ENCODE measurements at regions of chr19 and their contacts with region 1.

Region 1: GRCh38 chr19:7340959-7341837 is 7.5 kb upstream of the ARHGEF18 start:
- DNase-seq: peak; percentile 91
- H3K4me3 Mint-ChIP-seq: no peak overlapping the region
- H3K27ac Mint-ChIP-seq: peak overlapping the region; percentile 33
- H3K4me1 Mint-ChIP-seq: peaks cover 43% of the 10 kb centered on the region
- H3K27me3 Mint-ChIP-seq: no peaks in the 10 kb centered on the region

Region 2: GRCh38 chr19:7013678-7014077 is 327.5 kb before region 1 on chr19:
- CTCF ChIA-PET with region 1: no interaction called
- POLR2A ChIA-PET with region 1: no interaction called
- intact Hi-C with region 1: loop called (anchors 10 kb)
- DNase-seq: peak; percentile 37
- H3K4me3 Mint-ChIP-seq: no peak overlapping the region
- H3K27ac Mint-ChIP-seq: peak overlapping the region; percentile 71
- H3K4me1 Mint-ChIP-seq: peaks cover 41% of the 10 kb centered on the region
- H3K27me3 Mint-ChIP-seq: no peaks in the 10 kb centered on the region

Region 3: GRCh38 chr19:7098701-7099596 is 242.2 kb before region 1 on chr19:
- CTCF ChIA-PET with region 1: interaction called, 29 read pairs
- POLR2A ChIA-PET with region 1: interaction called, 3 read pairs
- intact Hi-C with region 1: loop called (anchors 1 kb)
- DNase-seq: peak; percentile 91
- H3K4me3 Mint-ChIP-seq: peak overlapping the region; percentile 89
- H3K27ac Mint-ChIP-seq: peak overlapping the region; percentile 92
- H3K4me1 Mint-ChIP-seq: peaks cover 21% of the 10 kb centered on the region
- H3K27me3 Mint-ChIP-seq: peaks cover 1% of the 10 kb centered on the region

Region 4: GRCh38 chr19:7109678-7110289 is 231.4 kb before region 1 on chr19:
- CTCF ChIA-PET with region 1: no interaction called
- POLR2A ChIA-PET with region 1: no interaction called
- intact Hi-C with region 1: no loop called
- DNase-seq: no peak
- H3K4me3 Mint-ChIP-seq: no peak overlapping the region
- H3K27ac Mint-ChIP-seq: no peak overlapping the region
- H3K4me1 Mint-ChIP-seq: no peaks in the 10 kb centered on the region
- H3K27me3 Mint-ChIP-seq: peaks cover 13% of the 10 kb centered on the region

Region 5: GRCh38 chr19:7145494-7146485 is 195.4 kb before region 1 on chr19:
- CTCF ChIA-PET with region 1: interaction called, 44 read pairs
- POLR2A ChIA-PET with region 1: no interaction called
- intact Hi-C with region 1: loop called (anchors 1 kb)
- DNase-seq: no peak
- H3K4me3 Mint-ChIP-seq: no peak overlapping the region
- H3K27ac Mint-ChIP-seq: no peak overlapping the region
- H3K4me1 Mint-ChIP-seq: no peaks in the 10 kb centered on the region
- H3K27me3 Mint-ChIP-seq: no peaks in the 10 kb centered on the region

Region 6: GRCh38 chr19:7304200-7304599 is 37.0 kb before region 1 on chr19:
- CTCF ChIA-PET with region 1: no interaction called
- POLR2A ChIA-PET with region 1: no interaction called
- intact Hi-C with region 1: no loop called
- DNase-seq: no peak
- H3K4me3 Mint-ChIP-seq: no peak overlapping the region
- H3K27ac Mint-ChIP-seq: no peak overlapping the region
- H3K4me1 Mint-ChIP-seq: no peaks in the 10 kb centered on the region
- H3K27me3 Mint-ChIP-seq: peaks cover 4% of the 10 kb centered on the region

Region 7: DNA sequence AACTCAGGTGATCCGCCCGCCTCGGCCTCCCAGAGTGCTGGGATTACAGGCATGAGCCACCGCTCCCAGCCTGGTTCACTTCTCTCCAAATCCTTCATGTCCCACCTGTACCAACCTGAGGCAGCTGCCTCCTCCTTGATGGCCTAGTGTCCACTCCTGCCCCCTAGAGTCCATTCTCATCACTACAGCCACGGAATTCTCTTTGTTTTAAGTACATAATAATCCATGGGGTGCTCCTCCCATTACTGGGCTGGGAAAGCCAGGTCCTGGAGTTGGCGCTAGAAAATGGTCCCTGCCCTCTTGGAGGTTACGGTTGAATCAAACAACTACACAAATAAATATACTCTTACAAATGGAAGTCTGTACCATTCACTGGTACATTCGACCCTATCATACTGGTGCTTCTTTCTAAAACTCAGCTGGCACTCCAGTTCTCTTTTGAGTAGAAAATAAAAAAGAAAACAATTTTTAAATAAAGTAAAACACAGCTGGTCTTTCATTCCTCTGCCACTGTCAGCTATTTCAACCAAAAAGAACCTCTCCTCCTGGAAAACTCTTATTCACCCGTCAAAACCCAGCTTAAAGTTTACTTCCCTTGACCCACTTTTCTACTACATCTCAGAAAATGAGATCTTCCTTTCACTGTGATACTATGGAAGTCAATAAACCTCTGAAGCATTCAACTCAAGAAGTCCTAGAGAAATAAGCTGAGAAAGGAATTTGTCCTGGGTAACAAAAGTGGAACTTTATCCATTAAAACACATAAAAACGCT is 14.9 kb before region 1 on chr19:
- CTCF ChIA-PET with region 1: interaction called, 18 read pairs
- POLR2A ChIA-PET with region 1: no interaction called
- intact Hi-C with region 1: no loop called
- DNase-seq: peak; percentile 63
- H3K4me3 Mint-ChIP-seq: no peak overlapping the region
- H3K27ac Mint-ChIP-seq: no peak overlapping the region
- H3K4me1 Mint-ChIP-seq: no peaks in the 10 kb centered on the region
- H3K27me3 Mint-ChIP-seq: peaks cover under 1% of the 10 kb centered on the region

Region 8: DNA sequence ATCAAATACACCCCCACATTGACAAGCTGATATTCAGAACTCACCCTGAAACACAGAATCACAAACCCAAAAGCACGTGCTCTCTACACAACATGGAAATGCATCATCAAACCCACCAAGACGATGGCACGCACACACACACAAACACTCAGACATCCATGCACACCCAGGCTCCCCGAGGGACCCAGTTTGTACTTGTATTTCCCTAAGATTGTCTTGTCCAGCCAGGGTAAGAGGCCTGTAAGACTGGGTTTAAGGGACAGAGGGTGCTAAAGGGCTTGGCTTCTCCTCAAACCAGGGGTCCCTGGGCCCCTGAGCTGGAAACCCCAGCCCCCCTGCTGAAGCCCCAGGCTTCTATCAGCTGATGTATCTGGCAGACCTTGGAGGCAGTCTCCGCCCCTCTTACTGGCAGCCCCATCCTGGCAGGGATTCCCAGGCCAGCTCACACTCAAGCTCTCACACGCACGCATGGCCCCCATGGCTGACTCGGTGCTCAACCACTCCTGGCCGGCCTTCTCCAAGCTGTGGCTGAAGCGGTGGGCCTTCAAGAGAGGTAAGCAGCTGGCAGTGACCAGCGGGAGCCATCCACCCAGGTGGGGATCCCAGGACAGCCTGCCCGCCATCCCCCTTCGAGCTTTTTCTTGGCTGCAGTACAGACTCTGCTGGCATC is 14.1 kb after region 1 on chr19:
- CTCF ChIA-PET with region 1: interaction called, 26 read pairs
- POLR2A ChIA-PET with region 1: interaction called, 3 read pairs
- intact Hi-C with region 1: no loop called
- DNase-seq: no peak
- H3K4me3 Mint-ChIP-seq: no peak overlapping the region
- H3K27ac Mint-ChIP-seq: no peak overlapping the region
- H3K4me1 Mint-ChIP-seq: peaks cover 35% of the 10 kb centered on the region
- H3K27me3 Mint-ChIP-seq: no peaks in the 10 kb centered on the region

Region 9: DNA sequence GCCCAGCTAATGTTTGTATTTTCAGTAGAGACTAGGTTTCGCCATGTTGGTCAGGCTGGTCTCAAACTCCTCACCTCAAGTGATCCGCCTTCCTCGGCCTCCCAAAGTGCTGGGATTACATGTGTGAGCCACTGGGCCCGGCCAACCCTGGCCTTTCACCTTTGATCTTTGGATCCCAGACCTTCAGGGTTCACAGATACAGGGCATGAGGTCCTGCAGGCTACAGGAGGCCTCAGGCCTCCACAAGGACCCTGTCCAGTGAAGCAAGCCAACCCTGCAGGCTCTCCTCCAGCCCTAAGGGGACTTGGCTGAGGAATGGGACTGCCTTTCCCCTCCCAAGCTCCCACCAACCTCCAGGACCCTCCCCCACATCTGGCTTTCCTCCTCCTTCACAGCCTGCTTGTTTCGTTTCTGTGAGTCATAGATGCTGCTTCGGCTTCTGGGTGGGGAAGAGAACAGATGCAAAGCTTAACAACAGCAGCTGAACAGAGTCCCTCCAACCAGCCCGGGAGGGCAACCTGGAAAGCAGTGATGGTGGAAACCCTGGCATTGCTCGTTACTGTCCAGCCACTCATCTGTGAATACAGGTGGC is 19.3 kb after region 1 on chr19:
- CTCF ChIA-PET with region 1: interaction called, 26 read pairs
- POLR2A ChIA-PET with region 1: no interaction called
- intact Hi-C with region 1: no loop called
- DNase-seq: no peak
- H3K4me3 Mint-ChIP-seq: no peak overlapping the region
- H3K27ac Mint-ChIP-seq: no peak overlapping the region
- H3K4me1 Mint-ChIP-seq: peaks cover 30% of the 10 kb centered on the region
- H3K27me3 Mint-ChIP-seq: no peaks in the 10 kb centered on the region

Measured in activated CD4-positive, alpha-beta memory T cell treated with anti-CD3 and anti-CD28 coated beads for 36 hours (primary cell).